ENCODE measurements at regions of chr11 and their contacts with region 1.

Region 1: DNA sequence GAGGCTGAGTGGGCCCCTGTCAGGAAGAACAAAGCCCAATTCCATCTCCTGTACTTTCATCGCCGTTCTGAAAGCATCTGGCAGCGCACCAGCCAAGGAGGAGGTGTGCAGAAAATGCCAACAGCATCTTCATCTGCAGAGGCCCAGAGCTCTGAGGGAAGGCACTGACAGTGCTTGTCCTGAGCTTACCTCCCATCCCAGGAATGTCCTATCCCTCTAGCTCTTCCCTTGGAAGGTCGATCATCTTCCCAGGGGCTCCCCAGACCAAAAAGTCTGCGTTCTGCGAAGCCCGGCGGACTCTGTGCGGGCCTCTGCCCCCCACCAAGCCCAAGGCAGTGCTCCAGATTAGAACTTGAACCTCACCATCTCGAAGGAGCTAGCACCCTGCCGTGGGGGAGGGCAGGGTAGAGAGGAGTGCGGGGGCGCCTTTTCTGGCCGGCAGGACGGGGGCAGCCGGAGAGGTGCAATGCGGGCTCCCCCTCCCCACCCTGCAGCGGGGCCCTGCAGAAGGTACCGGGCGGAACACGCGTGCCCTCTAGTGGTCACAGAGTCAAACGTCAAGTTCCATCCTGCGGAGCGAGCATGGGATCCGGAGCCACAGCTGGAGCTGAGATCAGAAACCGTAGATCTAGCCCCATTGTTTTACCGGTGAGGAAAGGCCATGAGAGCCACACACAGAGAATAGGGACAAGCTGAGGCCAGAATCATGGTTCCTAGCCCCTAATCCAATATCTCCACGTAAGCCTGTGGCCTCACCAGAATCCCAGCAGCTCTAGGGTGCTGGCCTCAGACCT is 5.0 kb downstream of the SCN2B start:
- DNase-seq: peak; percentile 88
- CTCF ChIP-seq: peak; percentile 93

Region 2: DNA sequence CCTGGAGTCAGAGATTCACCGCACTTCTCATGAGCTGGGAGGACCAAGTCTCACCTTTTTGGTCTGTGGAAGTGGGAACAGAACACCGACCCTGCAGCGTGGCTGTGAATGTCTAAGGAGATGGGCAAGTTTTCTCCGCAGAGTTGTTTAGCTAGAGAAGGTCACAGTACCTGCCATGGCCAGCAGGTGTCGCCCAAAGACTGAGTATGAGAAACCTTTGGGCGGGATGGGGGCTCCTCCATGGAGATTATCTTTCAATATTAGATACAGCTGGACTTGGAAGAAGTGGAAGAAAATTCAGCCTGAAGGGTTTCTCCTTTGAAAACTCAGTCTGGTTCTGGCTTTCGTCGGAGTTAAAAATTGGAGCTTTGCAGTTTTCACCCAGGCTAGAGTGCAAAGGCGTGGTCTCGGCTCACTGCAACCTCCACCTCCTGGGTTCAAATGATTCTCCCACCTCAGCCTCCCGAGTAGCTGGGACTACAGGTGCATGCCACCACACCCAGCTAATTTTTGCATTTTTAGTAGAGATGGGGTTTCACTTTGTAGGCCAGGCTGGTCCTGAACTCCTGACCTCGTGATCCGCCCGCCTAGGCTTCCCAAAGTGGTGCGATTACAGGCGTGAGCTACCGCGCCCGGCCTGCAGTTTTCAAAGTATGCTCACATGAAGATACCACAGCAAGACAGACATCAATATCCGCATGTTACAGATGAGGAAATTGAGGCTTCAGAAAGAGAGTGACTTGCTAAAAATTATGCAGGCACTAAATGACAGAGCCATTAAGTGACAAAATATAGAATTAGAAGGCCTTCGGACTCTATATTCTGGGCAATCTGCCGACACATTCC is 363.8 kb before region 1 on chr11:
- CTCF ChIA-PET with region 1: interaction called, 11 read pairs
- POLR2A ChIA-PET with region 1: no interaction called
- DNase-seq: peak; percentile 78
- CTCF ChIP-seq: peak; percentile 87

Region 3: GRCh38 chr11:118139578-118139977 is 31.9 kb before region 1 on chr11:
- CTCF ChIA-PET with region 1: interaction called, 83 read pairs
- POLR2A ChIA-PET with region 1: no interaction called
- DNase-seq: no peak
- CTCF ChIP-seq: no peak

Region 4: DNA sequence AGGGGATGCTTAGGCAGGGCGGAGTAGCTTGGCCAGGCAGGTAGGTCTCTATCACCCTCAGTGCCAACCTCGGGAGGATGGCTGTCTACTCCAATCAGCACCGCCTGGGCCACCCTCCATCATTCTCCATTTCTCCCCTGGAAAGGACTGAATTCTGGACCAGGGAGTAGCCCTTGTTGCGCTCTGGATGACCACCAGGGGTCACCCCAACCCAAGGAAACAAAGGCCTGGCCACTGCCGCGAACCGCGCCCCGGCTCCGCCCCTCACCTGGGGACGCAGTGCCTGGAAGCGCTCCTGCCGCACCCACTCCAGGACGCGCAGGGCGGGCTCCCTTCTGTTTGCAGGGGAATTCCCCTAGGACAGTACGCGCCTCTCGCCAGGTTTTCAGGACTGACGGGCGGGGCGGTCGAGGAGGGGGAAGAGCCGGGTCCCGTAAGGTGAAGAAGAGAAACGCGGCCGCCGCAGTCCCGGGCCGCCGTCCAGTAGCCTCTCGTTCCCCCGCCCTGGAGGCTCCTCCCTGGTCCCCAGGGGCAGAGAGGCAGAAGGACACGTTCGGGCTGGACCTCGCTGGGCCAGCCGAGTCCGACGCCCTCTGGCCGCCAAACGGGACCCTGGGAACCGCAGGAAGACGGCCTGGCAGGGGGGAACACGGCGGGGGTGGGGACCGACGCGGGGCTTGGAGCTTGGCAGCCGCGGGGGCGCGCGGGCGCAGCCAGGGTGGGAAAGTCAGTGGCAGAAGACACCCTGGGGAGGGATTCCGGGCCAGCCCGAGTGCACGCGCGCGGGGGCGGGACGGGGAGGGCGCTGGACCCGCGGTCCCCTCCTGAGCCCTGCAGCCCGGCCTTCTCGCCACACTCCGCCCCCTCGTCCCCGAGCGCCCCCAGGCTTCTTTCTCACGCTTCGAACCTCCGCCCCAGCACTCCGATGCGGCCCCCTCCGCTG is 25.9 kb before region 1 on chr11:
- CTCF ChIA-PET with region 1: interaction called, 83 read pairs
- POLR2A ChIA-PET with region 1: no interaction called
- DNase-seq: peak; percentile 94
- CTCF ChIP-seq: peak; percentile 92

Region 5: GRCh38 chr11:118156531-118157185 is 14.8 kb before region 1 on chr11:
- CTCF ChIA-PET with region 1: interaction called, 73 read pairs
- POLR2A ChIA-PET with region 1: no interaction called
- DNase-seq: no peak
- CTCF ChIP-seq: no peak

Region 6: DNA sequence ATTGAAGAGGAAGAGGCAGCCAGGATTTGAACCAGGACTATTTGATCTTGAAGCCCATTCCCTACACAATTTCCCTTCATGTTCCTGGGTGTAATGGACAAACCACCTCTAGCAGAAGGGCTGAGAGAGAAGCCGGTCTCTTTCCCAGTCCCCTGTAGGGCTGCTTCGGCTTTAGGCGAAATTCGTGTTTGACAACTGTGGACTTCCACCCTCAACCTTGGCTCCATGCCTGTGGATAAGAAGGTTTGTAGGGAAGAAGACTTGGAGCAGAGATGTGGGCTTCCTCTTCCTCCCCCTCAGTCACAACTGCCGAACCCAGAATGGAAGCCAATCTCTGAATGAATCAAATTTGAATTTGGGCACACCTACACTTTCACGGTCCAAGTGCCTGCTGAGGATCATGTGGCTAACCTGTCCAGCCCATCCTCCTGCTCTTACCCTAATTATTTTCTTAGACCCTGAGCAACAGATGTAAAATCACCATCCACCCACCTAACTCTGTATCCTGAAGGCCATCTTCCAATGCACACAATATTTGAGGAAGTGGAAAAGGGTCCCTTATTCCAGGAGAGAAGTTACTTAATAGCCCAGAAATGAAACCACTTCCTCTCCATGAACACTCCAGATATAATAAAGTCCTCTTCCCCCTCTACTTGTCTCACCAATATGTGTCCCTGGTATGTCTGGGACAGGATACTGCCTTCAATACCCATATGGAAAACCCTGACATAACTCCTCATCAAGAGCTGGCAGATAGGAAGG is 15.1 kb after region 1 on chr11:
- CTCF ChIA-PET with region 1: interaction called, 46 read pairs
- POLR2A ChIA-PET with region 1: no interaction called
- DNase-seq: no peak
- CTCF ChIP-seq: no peak

Region 7: GRCh38 chr11:118290923-118291322 is 119.5 kb after region 1 on chr11:
- CTCF ChIA-PET with region 1: interaction called, 14 read pairs
- POLR2A ChIA-PET with region 1: no interaction called
- DNase-seq: peak; percentile 50
- CTCF ChIP-seq: peak; percentile 61

Region 8: GRCh38 chr11:118491041-118491440 is 319.6 kb after region 1 on chr11:
- CTCF ChIA-PET with region 1: no interaction called
- POLR2A ChIA-PET with region 1: no interaction called
- DNase-seq: no peak
- CTCF ChIP-seq: no peak

Measured in GM10248 (cell line).